Left ventricle myocardium inferior (tissue), 1 donor: ENCODE measurements at regions of chr1 and their contacts with region 1.

Region 1: GRCh38 chr1:85307987-85308832 is 31.8 kb upstream of the BCL10 start:
- DNase-seq: peak; percentile 88
- H3K4me3 ChIP-seq: peak overlapping the region; percentile 13
- H3K27ac ChIP-seq: no peak overlapping the region
- H3K4me1 ChIP-seq: peaks cover 10% of the 10 kb centered on the region
- H3K27me3 ChIP-seq: no peaks in the 10 kb centered on the region
- CTCF ChIP-seq: peak; percentile 99

Region 2: DNA sequence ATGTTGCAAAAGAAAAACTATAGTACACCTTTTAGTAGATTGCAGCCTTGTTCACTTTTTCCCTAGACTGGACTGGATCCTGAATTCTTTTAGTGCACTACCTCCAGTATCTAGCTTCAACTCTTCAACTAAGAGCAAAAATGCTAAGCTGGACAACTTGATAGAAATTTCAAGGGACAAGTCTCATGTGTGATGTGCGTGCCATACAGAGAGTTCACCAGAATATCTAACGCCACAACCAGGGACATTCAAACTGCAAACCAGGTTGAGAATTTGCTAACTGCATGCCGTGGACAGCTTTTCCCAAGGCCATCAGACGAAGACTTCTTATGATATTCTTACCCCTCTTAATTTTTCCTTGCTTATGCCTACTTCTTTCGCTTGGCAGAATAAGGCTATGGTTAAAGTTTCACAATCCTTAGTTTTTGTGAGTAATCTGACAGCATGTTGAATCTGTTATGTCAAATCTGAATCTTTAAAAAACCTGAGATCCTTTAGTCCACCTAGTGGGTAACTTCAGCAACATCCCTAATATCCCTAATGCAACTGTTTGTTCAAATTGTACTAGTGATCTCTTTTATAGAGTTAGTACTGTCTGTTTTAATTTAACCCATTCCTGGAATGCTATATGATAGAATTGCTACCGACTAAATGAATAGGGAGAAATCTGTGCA is 90.3 kb after region 1 on chr1:
- intact Hi-C with region 1: loop called (anchors 2 kb)
- DNase-seq: no peak
- H3K4me3 ChIP-seq: no peak overlapping the region
- H3K27ac ChIP-seq: no peak overlapping the region
- H3K4me1 ChIP-seq: peaks cover 9% of the 10 kb centered on the region
- H3K27me3 ChIP-seq: no peaks in the 10 kb centered on the region
- CTCF ChIP-seq: peak; percentile 59

Region 3: GRCh38 chr1:85504360-85504811 is 196.2 kb after region 1 on chr1:
- intact Hi-C with region 1: loop called (anchors 2 kb)
- DNase-seq: no peak
- H3K4me3 ChIP-seq: no peak overlapping the region
- H3K27ac ChIP-seq: no peak overlapping the region
- H3K4me1 ChIP-seq: peaks cover 4% of the 10 kb centered on the region
- H3K27me3 ChIP-seq: no peaks in the 10 kb centered on the region
- CTCF ChIP-seq: no peak

Region 4: GRCh38 chr1:85580872-85581801 is 272.9 kb after region 1 on chr1:
- intact Hi-C with region 1: loop called (anchors 10 kb)
- DNase-seq: peak; percentile 72
- H3K4me3 ChIP-seq: peak overlapping the region; percentile 84
- H3K27ac ChIP-seq: peak overlapping the region; percentile 99
- H3K4me1 ChIP-seq: peaks cover 77% of the 10 kb centered on the region
- H3K27me3 ChIP-seq: no peaks in the 10 kb centered on the region
- CTCF ChIP-seq: peak; percentile 86

Region 5: GRCh38 chr1:85692730-85693314 is 384.6 kb after region 1 on chr1:
- intact Hi-C with region 1: loop called (anchors 5 kb)
- DNase-seq: no peak
- H3K4me3 ChIP-seq: no peak overlapping the region
- H3K27ac ChIP-seq: peak overlapping the region; percentile 50
- H3K4me1 ChIP-seq: peaks cover 26% of the 10 kb centered on the region
- H3K27me3 ChIP-seq: no peaks in the 10 kb centered on the region
- CTCF ChIP-seq: peak; percentile 67